RWPE1 (cell line): ENCODE measurements at regions of chr7 and their contacts with region 1.

Region 1: DNA sequence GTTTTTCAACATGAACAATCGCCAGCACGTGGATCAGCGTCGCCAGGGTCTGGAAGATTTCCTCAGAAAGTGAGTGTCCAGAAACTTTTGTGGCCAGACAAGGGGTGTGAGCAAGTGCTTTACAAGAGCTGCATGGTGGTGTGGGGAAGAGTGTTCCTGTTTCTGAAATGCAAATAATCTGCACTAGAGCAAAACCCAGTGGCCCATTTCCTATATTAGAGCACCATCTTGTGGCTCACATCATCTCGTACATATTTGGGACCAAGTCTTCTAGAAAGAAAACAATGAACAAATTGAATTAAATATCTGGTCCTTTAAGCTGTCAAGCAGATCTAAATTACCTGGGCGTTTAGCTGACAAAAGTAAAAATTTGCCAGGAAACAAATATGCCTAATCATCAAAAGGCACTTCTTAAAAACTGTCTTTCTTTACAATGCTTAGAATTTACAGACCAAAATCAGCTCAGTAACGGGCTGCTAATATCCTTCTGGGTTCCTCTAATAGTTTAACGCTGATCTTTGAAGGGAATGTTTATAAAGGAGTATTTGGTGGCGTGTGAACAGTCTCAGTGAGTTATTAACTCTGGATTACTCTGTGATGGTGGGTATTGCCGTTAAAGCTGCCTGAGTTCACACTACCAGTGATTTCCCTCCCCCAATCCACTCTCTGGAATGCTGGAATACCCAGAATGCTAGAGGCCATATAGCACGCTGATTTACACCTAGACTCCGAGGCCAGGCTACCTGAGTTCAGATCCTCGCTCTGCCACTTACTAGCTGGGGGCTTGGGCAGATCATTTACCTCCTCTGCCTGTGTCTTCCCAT is 73.6 kb downstream of the SNX10 start:
- DNase-seq: peak; percentile 45
- H3K27ac ChIP-seq: no peak overlapping the region
- CTCF ChIP-seq: peak; percentile 76

Region 2: GRCh38 chr7:25894902-25895791 is 470.1 kb before region 1 on chr7:
- CTCF ChIA-PET with region 1: interaction called, 24 read pairs
- POLR2A ChIA-PET with region 1: no interaction called
- DNase-seq: no peak
- H3K27ac ChIP-seq: no peak overlapping the region
- CTCF ChIP-seq: peak; percentile 50

Region 3: GRCh38 chr7:26500749-26501352 is 135.6 kb after region 1 on chr7:
- CTCF ChIA-PET with region 1: interaction called, 10 read pairs
- POLR2A ChIA-PET with region 1: no interaction called
- DNase-seq: peak; percentile 49
- H3K27ac ChIP-seq: no peak overlapping the region
- CTCF ChIP-seq: peak; percentile 69

Region 4: GRCh38 chr7:26667500-26668133 is 302.3 kb after region 1 on chr7:
- CTCF ChIA-PET with region 1: interaction called, 39 read pairs
- POLR2A ChIA-PET with region 1: no interaction called
- DNase-seq: peak; percentile 72
- H3K27ac ChIP-seq: no peak overlapping the region
- CTCF ChIP-seq: peak; percentile 97

Region 5: GRCh38 chr7:27160546-27161213 is 795.4 kb after region 1 on chr7:
- CTCF ChIA-PET with region 1: interaction called, 11 read pairs
- POLR2A ChIA-PET with region 1: no interaction called
- DNase-seq: no peak
- H3K27ac ChIP-seq: peak overlapping the region; percentile 94
- CTCF ChIP-seq: peak; percentile 99